CD8-positive, alpha-beta T cell (primary cell): ENCODE measurements at regions of chrX and their contacts with region 1.

Region 1: GRCh38 chrX:21839334-21840192 is at the start of gene MBTPS2:
- DNase-seq: peak; percentile 61 to 89 (median 79)
- ATAC-seq: peak; percentile 93
- H3K4me3 ChIP-seq: peak within 1 kb of the TSS; percentile 78 to 80
- H3K4me3 Mint-ChIP-seq: peak within 1 kb of the TSS; percentile 89
- H3K27ac ChIP-seq: peak within 1 kb of the TSS; percentile 65 to 75
- H3K27ac Mint-ChIP-seq: peak within 1 kb of the TSS; percentile 94
- H3K4me1 ChIP-seq: no peaks in the 10 kb centered on the region
- H3K4me1 Mint-ChIP-seq: peaks cover 7% of the 10 kb centered on the region
- H3K27me3 ChIP-seq: no peaks in the 10 kb centered on the region
- H3K27me3 Mint-ChIP-seq: no peaks in the 10 kb centered on the region
- CTCF ChIP-seq: no peak
- total RNA-seq, gene MBTPS2: 2.5 to 2.8 TPM

Region 2: DNA sequence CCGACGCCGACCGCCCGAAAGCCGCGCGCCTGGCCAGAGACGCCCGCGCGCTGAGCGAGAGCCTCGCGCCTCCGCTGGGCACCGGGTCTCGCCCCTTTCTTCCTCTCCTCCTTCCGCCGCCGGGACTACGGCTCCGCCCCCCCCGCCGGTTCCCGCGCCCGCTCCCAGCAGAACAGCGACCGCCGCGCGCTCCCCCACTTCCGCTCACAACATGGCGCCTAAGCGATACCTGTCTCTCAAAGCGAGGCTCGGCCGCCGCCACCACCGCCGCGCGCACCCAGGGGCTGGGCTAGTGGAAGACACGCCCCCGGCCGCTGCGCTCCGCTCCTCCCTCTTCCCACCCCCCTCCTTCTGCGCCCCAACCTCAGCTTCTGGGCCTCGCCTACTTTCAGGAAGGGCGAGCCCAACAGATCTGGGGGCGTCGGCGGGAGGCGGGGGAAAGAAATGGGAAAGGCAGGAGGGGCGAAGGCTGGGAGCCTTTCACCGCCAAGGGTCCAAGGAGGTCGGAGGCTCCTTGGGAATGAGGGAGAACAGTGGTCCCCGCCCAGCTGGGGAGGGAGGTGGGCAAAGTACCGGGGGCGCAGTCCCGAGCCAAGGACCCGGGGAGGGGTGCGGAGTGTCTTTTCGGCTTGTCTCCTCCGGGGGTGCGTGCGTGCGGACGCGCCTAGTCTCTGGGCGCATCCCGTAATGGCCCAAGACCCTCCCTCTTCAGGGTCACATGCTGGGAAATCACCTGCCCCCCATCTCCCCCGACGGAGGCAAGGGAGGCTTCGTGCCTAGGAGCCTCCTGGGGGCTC is 1572.6 kb before region 1 on chrX and contains the start of gene RPS6KA3:
- CTCF ChIA-PET with region 1: no interaction called
- POLR2A ChIA-PET with region 1: no interaction called
- intact Hi-C with region 1: loop called in 1 of 2 experiments (anchors 5 kb)
- DNase-seq: peak; percentile 79 to 94 (median 89)
- ATAC-seq: peak; percentile 83
- H3K4me3 ChIP-seq: peak within 1 kb of the TSS; percentile 70 to 85
- H3K4me3 Mint-ChIP-seq: peak within 1 kb of the TSS; percentile 96
- H3K27ac ChIP-seq: peak within 1 kb of the TSS; percentile 80 to 83
- H3K27ac Mint-ChIP-seq: peak within 1 kb of the TSS; percentile 97
- H3K4me1 ChIP-seq: peaks cover 14% of the 10 kb centered on the region
- H3K4me1 Mint-ChIP-seq: peaks cover 19% of the 10 kb centered on the region
- H3K27me3 ChIP-seq: no peaks in the 10 kb centered on the region
- H3K27me3 Mint-ChIP-seq: no peaks in the 10 kb centered on the region
- CTCF ChIP-seq: no peak
- total RNA-seq, gene RPS6KA3: 36.9 to 37.3 TPM

Region 3: DNA sequence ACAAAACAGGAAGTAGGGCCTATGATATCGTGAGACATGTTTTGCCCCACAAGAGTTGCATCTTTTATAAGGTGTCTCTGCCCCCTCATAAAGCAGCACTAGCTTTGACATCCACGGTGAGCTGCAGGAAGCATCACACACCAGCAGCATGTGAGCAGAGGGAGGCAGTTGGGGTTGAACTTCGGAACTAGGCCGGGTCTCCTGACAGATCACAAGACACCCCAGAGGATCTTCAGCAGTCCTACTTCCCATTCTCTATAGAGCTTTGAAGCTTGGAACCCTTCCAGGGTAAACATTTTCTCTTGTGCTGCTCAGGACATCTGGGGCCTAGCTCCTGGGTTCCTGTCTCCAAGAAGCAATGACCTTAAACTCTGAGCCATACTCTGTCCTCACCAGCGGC is 43.7 kb after region 1 on chrX:
- CTCF ChIA-PET with region 1: no interaction called
- POLR2A ChIA-PET with region 1: no interaction called
- intact Hi-C with region 1: no loop called
- DNase-seq: no peak
- ATAC-seq: no peak
- H3K4me3 ChIP-seq: no peak overlapping the region
- H3K4me3 Mint-ChIP-seq: no peak overlapping the region
- H3K27ac ChIP-seq: no peak overlapping the region
- H3K27ac Mint-ChIP-seq: no peak overlapping the region
- H3K4me1 ChIP-seq: no peaks in the 10 kb centered on the region
- H3K4me1 Mint-ChIP-seq: no peaks in the 10 kb centered on the region
- H3K27me3 ChIP-seq: no peaks in the 10 kb centered on the region
- H3K27me3 Mint-ChIP-seq: no peaks in the 10 kb centered on the region
- CTCF ChIP-seq: no peak

Region 4: GRCh38 chrX:21940356-21940829 is 100.8 kb after region 1 on chrX and contains the start of gene SMS:
- CTCF ChIA-PET with region 1: no interaction called
- POLR2A ChIA-PET with region 1: interaction called, 3 read pairs
- intact Hi-C with region 1: loop called (anchors 2 to 10 kb)
- DNase-seq: peak; percentile 0 to 73 (median 34)
- ATAC-seq: peak; percentile 62
- H3K4me3 ChIP-seq: peak within 1 kb of the TSS; percentile 52 to 57
- H3K4me3 Mint-ChIP-seq: peak within 1 kb of the TSS; percentile 86
- H3K27ac ChIP-seq: peak within 1 kb of the TSS; percentile 35 to 64
- H3K27ac Mint-ChIP-seq: peak within 1 kb of the TSS; percentile 88
- H3K4me1 ChIP-seq: peaks cover 15% of the 10 kb centered on the region
- H3K4me1 Mint-ChIP-seq: peaks cover 25% of the 10 kb centered on the region
- H3K27me3 ChIP-seq: no peaks in the 10 kb centered on the region
- H3K27me3 Mint-ChIP-seq: no peaks in the 10 kb centered on the region
- CTCF ChIP-seq: no peak
- total RNA-seq, gene SMS: 17.9 to 19.1 TPM

Region 5: DNA sequence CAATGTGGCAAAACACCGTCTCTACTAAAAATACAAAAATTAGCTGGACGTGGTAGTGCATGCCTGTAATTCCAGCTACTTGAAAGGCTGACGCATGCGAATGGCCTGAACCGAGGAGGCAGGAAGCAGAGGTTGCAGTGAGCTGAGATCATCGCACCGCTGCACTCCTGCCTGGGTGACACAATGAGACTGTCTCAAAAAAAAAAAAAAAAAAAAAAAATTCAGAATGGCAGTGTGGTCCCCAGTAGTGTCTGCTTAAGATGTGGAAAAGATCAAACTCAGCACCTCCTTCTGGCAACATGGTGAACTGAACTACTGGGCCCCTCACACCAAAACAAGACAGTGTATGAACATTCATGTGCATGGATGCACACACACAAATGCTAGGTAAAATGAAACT is 133.2 kb after region 1 on chrX:
- CTCF ChIA-PET with region 1: no interaction called
- POLR2A ChIA-PET with region 1: interaction called, 3 read pairs
- intact Hi-C with region 1: loop called in 1 of 2 experiments (anchors 5 kb)
- DNase-seq: peak in 8 of 9 experiments; percentile 2 to 74 (median 37)
- ATAC-seq: peak; percentile 95
- H3K4me3 ChIP-seq: no peak overlapping the region
- H3K4me3 Mint-ChIP-seq: peak overlapping the region; percentile 57
- H3K27ac ChIP-seq: no peak overlapping the region
- H3K27ac Mint-ChIP-seq: peak overlapping the region; percentile 82
- H3K4me1 ChIP-seq: peaks cover 18% of the 10 kb centered on the region
- H3K4me1 Mint-ChIP-seq: peaks cover 22% of the 10 kb centered on the region
- H3K27me3 ChIP-seq: no peaks in the 10 kb centered on the region
- H3K27me3 Mint-ChIP-seq: no peaks in the 10 kb centered on the region
- CTCF ChIP-seq: no peak

Region 6: DNA sequence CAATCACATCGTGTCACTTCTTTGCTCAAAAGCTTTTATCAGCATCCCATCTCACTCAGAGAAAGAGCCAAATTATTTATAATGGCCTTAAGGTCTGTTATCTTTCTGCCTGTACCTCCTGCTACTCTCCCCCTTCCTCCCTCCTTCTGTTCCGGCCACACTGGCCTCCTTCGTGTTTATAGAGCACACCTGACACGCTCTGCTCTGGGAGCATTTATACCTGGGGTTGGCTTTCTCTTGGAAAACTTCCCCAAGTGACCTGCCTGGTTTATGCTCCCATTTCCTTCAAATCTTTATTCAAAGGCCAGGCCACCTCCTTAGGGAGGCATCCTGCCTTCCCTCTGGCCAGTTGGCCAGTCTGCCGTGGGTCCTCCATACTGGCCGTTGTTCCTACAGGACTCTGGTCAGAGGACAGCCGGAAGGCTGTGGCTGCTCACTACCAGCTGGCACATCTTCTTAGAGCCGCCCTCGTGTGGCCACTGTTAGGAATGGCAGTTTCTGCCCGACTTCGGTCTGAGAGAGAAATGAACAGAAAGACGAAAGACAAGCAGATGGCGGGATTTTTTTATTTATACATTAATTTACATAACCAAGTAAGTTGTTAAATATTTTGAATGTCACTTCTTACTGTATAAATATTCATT is 353.0 kb after region 1 on chrX:
- CTCF ChIA-PET with region 1: no interaction called
- POLR2A ChIA-PET with region 1: no interaction called
- intact Hi-C with region 1: loop called in 1 of 2 experiments (anchors 5 kb)
- DNase-seq: peak; percentile 1 to 65 (median 39)
- ATAC-seq: peak; percentile 63
- H3K4me3 ChIP-seq: no peak overlapping the region
- H3K4me3 Mint-ChIP-seq: no peak overlapping the region
- H3K27ac ChIP-seq: no peak overlapping the region
- H3K27ac Mint-ChIP-seq: no peak overlapping the region
- H3K4me1 ChIP-seq: no peaks in the 10 kb centered on the region
- H3K4me1 Mint-ChIP-seq: peaks cover 3% of the 10 kb centered on the region
- H3K27me3 ChIP-seq: no peaks in the 10 kb centered on the region
- H3K27me3 Mint-ChIP-seq: peaks cover 2% of the 10 kb centered on the region
- CTCF ChIP-seq: peak; percentile 69

Region 7: DNA sequence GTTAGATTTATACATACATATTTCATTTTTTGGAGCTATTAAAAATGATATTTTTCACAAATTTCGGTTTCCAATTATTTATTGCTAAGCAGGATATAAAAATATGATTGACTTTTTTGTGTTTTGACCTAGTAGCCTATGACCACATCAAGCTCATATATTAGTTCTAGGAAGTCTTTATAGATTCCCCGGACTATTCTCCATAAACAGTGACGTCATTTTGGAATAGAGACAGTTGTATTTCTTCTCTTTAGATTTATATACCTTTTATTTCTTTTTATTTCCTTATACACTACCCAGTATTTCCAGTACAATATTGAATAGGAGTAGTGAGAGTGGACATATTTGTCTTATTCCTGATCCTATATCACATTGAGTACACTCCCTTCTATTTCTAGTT is 1192.0 kb after region 1 on chrX:
- CTCF ChIA-PET with region 1: no interaction called
- POLR2A ChIA-PET with region 1: no interaction called
- intact Hi-C with region 1: no loop called
- DNase-seq: no peak
- ATAC-seq: no peak
- H3K4me3 ChIP-seq: no peak overlapping the region
- H3K4me3 Mint-ChIP-seq: no peak overlapping the region
- H3K27ac ChIP-seq: no peak overlapping the region
- H3K27ac Mint-ChIP-seq: no peak overlapping the region
- H3K4me1 ChIP-seq: no peaks in the 10 kb centered on the region
- H3K4me1 Mint-ChIP-seq: no peaks in the 10 kb centered on the region
- H3K27me3 ChIP-seq: no peaks in the 10 kb centered on the region
- H3K27me3 Mint-ChIP-seq: no peaks in the 10 kb centered on the region
- CTCF ChIP-seq: no peak